Activated naive CD8-positive, alpha-beta T cell treated with anti-CD3 and anti-CD28 coated beads, Interleukin-2, amount 10 ng/mL, durations not matched to agents 7 days and 5 days (primary cell): ENCODE measurements at regions of chr18 and their contacts with region 1.

Region 1: GRCh38 chr18:51029694-51030536 is at the start of gene SMAD4:
- DNase-seq: peak; percentile 98
- ATAC-seq: peak; percentile 87
- H3K4me3 Mint-ChIP-seq: peak within 1 kb of the TSS; percentile 100
- H3K27ac Mint-ChIP-seq: peak within 1 kb of the TSS; percentile 99
- H3K4me1 Mint-ChIP-seq: peaks cover 44% of the 10 kb centered on the region
- H3K27me3 Mint-ChIP-seq: no peaks in the 10 kb centered on the region
- total RNA-seq, gene SMAD4: 84.9 to 105 TPM

Region 2: DNA sequence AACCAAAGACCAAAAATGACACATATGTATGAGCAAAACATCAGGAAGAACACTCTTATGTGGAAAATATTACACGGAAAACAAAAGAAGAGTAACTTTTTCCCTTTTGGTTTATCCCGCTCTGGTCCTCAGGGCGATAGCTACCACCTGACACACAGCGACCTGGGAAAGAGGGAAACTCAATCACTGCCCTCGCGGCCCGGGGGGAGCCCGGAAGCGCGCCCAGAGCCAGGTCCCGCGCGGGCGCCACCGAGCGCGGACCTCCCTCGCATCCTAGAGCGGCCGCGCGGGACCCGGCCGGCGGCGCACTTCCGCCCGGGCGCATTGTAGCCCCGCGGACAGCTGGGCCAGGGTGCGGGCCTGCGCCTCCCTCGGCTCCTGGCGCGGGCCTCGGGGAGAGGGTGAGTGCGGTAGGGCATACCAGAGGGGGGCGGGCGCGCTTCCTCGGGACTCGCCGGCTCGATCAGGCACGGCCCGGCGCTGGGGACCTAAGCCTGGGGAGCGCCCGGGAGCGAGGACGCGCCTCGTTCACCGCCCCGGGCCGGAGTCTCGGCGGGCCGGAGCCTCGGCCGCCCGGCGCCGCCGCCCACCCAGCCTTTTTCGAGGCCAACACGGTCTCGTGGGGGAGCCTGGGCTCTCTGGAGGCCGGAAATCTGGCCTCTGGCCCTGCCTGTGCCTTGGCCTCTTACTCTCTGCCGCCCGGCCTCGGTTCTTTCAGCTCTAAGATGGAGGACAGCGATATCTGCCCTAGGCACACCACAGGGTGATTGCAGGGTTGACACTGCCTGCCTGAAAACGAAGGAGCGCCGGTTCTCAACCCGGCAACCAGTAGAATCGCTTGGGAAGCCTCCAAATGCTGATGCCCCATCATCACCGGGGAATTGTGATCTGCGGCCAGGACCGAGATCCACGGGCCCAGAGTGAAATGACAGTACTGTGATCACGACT is 61.9 kb before region 1 on chr18 and contains the start of gene ELAC1:
- POLR2A ChIA-PET with region 1: interaction called, 38 read pairs
- DNase-seq: peak; percentile 83
- ATAC-seq: peak; percentile 94
- H3K4me3 Mint-ChIP-seq: peak within 1 kb of the TSS; percentile 92
- H3K27ac Mint-ChIP-seq: peak within 1 kb of the TSS; percentile 93
- H3K4me1 Mint-ChIP-seq: peaks cover 17% of the 10 kb centered on the region
- H3K27me3 Mint-ChIP-seq: peaks cover 3% of the 10 kb centered on the region
- total RNA-seq, gene ELAC1: 9.6 to 10.1 TPM

Region 3: GRCh38 chr18:51053814-51054213 is 23.9 kb after region 1 on chr18:
- POLR2A ChIA-PET with region 1: interaction called, 28 read pairs
- DNase-seq: no peak
- ATAC-seq: peak; percentile 87
- H3K4me3 Mint-ChIP-seq: peak overlapping the region; percentile 79
- H3K27ac Mint-ChIP-seq: peak overlapping the region; percentile 95
- H3K4me1 Mint-ChIP-seq: peaks cover 26% of the 10 kb centered on the region
- H3K27me3 Mint-ChIP-seq: no peaks in the 10 kb centered on the region